H1 (cell line): ENCODE measurements at regions of chr2 and their contacts with region 1.

Region 1: DNA sequence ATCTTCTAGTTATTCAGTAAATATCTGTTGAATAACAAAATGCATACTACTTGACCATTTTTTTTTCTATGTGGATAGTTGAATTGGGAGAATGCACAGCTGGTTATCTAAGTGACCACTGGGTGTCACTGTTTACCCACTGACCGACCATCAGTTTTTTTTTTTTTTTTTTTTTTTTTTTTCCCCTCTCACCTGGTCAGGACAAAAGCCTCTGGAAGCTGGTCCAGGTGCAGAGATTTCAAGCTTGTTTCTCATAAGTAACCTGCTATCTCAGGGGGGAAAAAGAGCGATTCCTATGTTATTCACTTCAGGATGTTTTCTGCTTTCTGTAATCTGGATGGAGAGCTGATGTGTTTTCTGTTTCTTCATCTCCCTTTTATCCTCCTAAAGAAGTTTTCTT is 256.0 kb downstream of the DCDC2C start:
- DNase-seq: peak in 1 of 2 experiments; percentile 13
- H3K4me3 ChIP-seq: no peak overlapping the region
- H3K27ac ChIP-seq: no peak overlapping the region
- H3K4me1 ChIP-seq: no peaks in the 10 kb centered on the region; a peak in 2 of 7 replicates
- H3K27me3 ChIP-seq: no peaks in the 10 kb centered on the region
- CTCF ChIP-seq: peak in 2 of 3 experiments; percentile 59 to 65; a peak in 3 of 4 replicates
- EP300 ChIP-seq: no peak
- POLR2A ChIP-seq: no peak
- RAD21 ChIP-seq: peak; percentile 94 to 95

Region 2: GRCh38 chr2:4762951-4763376 is 803.6 kb after region 1 on chr2:
- CTCF ChIA-PET with region 1: interaction called, 34 read pairs
- POLR2A ChIA-PET with region 1: no interaction called
- DNase-seq: peak in 1 of 2 experiments; percentile 63
- H3K4me3 ChIP-seq: no peak overlapping the region
- H3K27ac ChIP-seq: no peak overlapping the region
- H3K4me1 ChIP-seq: no peaks in the 10 kb centered on the region
- H3K27me3 ChIP-seq: no peaks in the 10 kb centered on the region
- CTCF ChIP-seq: peak; percentile 51 to 71 (median 67)
- EP300 ChIP-seq: no peak
- POLR2A ChIP-seq: no peak
- RAD21 ChIP-seq: peak; percentile 83 to 91